ENCODE measurements at regions of chrX and their contacts with region 1.

Region 1: DNA sequence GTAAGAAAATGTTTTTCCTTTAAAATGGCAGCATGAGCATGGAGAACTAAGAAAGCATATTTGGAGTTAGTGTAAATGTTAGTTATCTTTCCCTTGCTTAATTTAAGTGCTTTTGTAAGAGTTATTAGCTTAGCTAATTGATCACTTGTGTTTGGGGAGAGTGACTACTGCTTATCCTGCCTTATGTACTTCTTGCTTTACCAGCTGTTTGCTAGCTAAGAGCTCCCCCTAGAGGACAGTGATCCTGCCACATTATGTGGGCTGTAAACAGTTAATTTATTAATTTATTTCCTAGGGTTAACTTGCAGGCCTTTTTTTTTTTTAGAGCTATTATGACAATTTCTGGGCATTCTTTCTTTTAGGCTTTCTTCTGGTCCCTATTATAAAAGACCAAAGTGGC is 435.8 kb downstream of the MAGEB5 start:
- DNase-seq: no peak
- ATAC-seq: no peak
- H3K4me3 ChIP-seq: no peak overlapping the region
- H3K27ac ChIP-seq: no peak overlapping the region
- H3K4me1 ChIP-seq: no peaks in the 10 kb centered on the region
- H3K27me3 ChIP-seq: no peaks in the 10 kb centered on the region
- CTCF ChIP-seq: peak in 2 of 3 experiments; percentile 33 to 36; a peak in 3 of 6 replicates
- EP300 ChIP-seq: no peak
- POLR2A ChIP-seq: no peak
- RAD21 ChIP-seq: peak; percentile 24; the same call in 1 of the 2 replicates

Region 2: GRCh38 chrX:26557691-26558321 is 93.9 kb before region 1 on chrX:
- CTCF ChIA-PET with region 1: no interaction called
- POLR2A ChIA-PET with region 1: no interaction called
- RAD21 ChIA-PET with region 1: no interaction called
- SMC1A ChIA-PET with region 1: no interaction called
- in situ Hi-C with region 1: no loop called
- intact Hi-C with region 1: no loop called
- DNase-seq: no peak
- ATAC-seq: no peak
- H3K4me3 ChIP-seq: no peak overlapping the region
- H3K27ac ChIP-seq: no peak overlapping the region
- H3K4me1 ChIP-seq: no peaks in the 10 kb centered on the region
- H3K27me3 ChIP-seq: no peaks in the 10 kb centered on the region
- CTCF ChIP-seq: no peak
- EP300 ChIP-seq: no peak
- POLR2A ChIP-seq: no peak
- RAD21 ChIP-seq: no peak

Region 3: GRCh38 chrX:26631385-26631784 is 20.4 kb before region 1 on chrX:
- CTCF ChIA-PET with region 1: interaction called, 10 read pairs
- POLR2A ChIA-PET with region 1: no interaction called
- RAD21 ChIA-PET with region 1: no interaction called
- SMC1A ChIA-PET with region 1: interaction called, 4 read pairs
- in situ Hi-C with region 1: no loop called
- intact Hi-C with region 1: no loop called
- DNase-seq: no peak
- ATAC-seq: no peak
- H3K4me3 ChIP-seq: no peak overlapping the region
- H3K27ac ChIP-seq: no peak overlapping the region
- H3K4me1 ChIP-seq: no peaks in the 10 kb centered on the region
- H3K27me3 ChIP-seq: no peaks in the 10 kb centered on the region
- CTCF ChIP-seq: no peak
- EP300 ChIP-seq: no peak
- POLR2A ChIP-seq: no peak
- RAD21 ChIP-seq: no peak

Region 4: GRCh38 chrX:26664919-26665318 is 13.2 kb after region 1 on chrX:
- CTCF ChIA-PET with region 1: interaction called, 19 read pairs
- POLR2A ChIA-PET with region 1: no interaction called
- RAD21 ChIA-PET with region 1: no interaction called
- SMC1A ChIA-PET with region 1: interaction called, 4 read pairs
- in situ Hi-C with region 1: no loop called
- intact Hi-C with region 1: no loop called
- DNase-seq: no peak
- ATAC-seq: no peak
- H3K4me3 ChIP-seq: no peak overlapping the region
- H3K27ac ChIP-seq: no peak overlapping the region
- H3K4me1 ChIP-seq: no peaks in the 10 kb centered on the region
- H3K27me3 ChIP-seq: no peaks in the 10 kb centered on the region
- CTCF ChIP-seq: no peak
- EP300 ChIP-seq: no peak
- POLR2A ChIP-seq: no peak
- RAD21 ChIP-seq: no peak

Region 5: DNA sequence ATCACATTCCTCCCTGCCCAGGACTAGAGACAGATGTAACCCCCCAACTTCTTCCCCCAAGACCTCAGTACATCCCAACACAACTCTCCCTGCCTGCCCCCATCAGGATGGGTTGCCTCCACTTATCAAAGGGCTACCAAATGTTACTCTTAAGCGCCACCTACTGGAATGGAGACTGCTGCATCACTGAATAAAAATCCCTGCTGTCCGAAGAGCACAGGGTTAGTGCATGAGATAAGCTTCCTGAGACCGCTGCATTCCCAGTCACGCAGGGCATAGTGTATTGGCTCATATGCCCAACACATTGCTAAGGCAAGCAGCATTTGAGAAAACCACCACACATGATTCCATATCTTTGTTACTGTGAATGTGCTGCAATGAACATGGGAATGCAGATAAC is 266.9 kb after region 1 on chrX:
- CTCF ChIA-PET with region 1: interaction called, 3 read pairs
- POLR2A ChIA-PET with region 1: no interaction called
- RAD21 ChIA-PET with region 1: no interaction called
- SMC1A ChIA-PET with region 1: no interaction called
- in situ Hi-C with region 1: no loop called
- intact Hi-C with region 1: loop called (anchors 2 kb)
- DNase-seq: no peak
- ATAC-seq: peak; percentile 87
- H3K4me3 ChIP-seq: no peak overlapping the region
- H3K27ac ChIP-seq: no peak overlapping the region
- H3K4me1 ChIP-seq: no peaks in the 10 kb centered on the region
- H3K27me3 ChIP-seq: no peaks in the 10 kb centered on the region
- CTCF ChIP-seq: peak; percentile 55 to 63 (median 60)
- EP300 ChIP-seq: no peak
- POLR2A ChIP-seq: no peak
- RAD21 ChIP-seq: peak; percentile 69

Region 6: DNA sequence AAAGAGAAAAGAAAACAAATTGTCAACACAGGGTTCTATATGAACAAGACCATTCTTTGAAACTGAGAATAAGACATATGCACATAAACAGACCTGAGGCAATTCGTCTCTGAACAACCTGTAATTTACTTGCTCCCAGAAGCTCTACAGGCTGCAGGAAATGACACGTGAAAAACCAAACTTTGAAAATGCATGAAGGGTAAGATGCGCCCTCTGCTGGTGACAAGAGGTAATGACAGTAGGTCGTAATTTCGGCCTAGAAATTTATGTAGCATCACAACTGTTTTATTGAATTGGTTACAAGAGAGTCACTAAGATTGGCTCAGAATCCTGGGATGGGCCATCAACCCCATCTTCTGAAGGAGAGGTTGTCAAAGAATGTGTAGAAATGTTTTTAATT is 534.9 kb after region 1 on chrX:
- CTCF ChIA-PET with region 1: interaction called, 24 read pairs
- POLR2A ChIA-PET with region 1: no interaction called
- RAD21 ChIA-PET with region 1: interaction called, 4 read pairs
- SMC1A ChIA-PET with region 1: interaction called, 6 read pairs
- in situ Hi-C with region 1: loop called (anchors 5 kb)
- intact Hi-C with region 1: loop called (anchors 1 kb)
- DNase-seq: peak; percentile 0
- ATAC-seq: peak; percentile 62
- H3K4me3 ChIP-seq: no peak overlapping the region
- H3K27ac ChIP-seq: no peak overlapping the region
- H3K4me1 ChIP-seq: no peaks in the 10 kb centered on the region
- H3K27me3 ChIP-seq: no peaks in the 10 kb centered on the region
- CTCF ChIP-seq: peak; percentile 79 to 83 (median 83)
- EP300 ChIP-seq: no peak
- POLR2A ChIP-seq: no peak
- RAD21 ChIP-seq: peak; percentile 78

Region 7: DNA sequence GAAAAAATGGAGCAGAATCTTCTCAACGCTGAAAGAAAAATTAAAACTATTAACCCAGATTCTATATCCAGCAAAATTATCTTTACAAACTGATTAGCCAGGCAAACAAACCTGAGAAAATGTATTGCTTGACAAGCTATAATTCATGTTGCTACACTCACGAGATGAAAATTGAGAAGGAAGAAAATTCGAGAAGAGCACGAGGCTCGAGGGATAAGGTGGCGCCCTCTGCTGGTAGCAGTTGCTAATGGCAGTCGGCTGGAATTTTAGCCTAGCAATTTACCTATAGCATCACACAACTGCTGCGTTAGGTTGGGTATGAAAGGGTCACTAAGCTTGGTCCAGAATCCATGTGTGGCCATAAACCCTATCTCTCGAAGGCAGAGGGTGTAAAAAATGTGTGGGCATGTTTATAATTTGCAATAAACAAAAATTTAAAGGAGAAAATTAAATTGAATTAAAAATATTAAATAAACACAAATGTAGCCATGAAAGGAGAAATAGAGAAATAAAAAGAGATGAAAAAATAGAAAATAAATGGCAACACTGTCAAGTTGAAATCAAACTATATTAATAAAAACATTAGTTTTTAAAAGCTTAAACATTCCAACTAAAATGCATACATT is 684.8 kb after region 1 on chrX:
- CTCF ChIA-PET with region 1: no interaction called
- POLR2A ChIA-PET with region 1: no interaction called
- RAD21 ChIA-PET with region 1: no interaction called
- SMC1A ChIA-PET with region 1: no interaction called
- in situ Hi-C with region 1: no loop called
- intact Hi-C with region 1: loop called (anchors 2 kb)
- DNase-seq: no peak
- ATAC-seq: peak; percentile 73
- H3K4me3 ChIP-seq: no peak overlapping the region
- H3K27ac ChIP-seq: no peak overlapping the region
- H3K4me1 ChIP-seq: no peaks in the 10 kb centered on the region
- H3K27me3 ChIP-seq: no peaks in the 10 kb centered on the region
- CTCF ChIP-seq: peak; percentile 67 to 90 (median 87)
- EP300 ChIP-seq: no peak
- POLR2A ChIP-seq: no peak
- RAD21 ChIP-seq: peak; percentile 43

Region 8: GRCh38 chrX:27399146-27399456 is 747.3 kb after region 1 on chrX:
- CTCF ChIA-PET with region 1: interaction called, 4 read pairs
- POLR2A ChIA-PET with region 1: no interaction called
- RAD21 ChIA-PET with region 1: no interaction called
- SMC1A ChIA-PET with region 1: no interaction called
- in situ Hi-C with region 1: no loop called
- intact Hi-C with region 1: loop called (anchors 5 kb)
- DNase-seq: no peak
- ATAC-seq: no peak
- H3K4me3 ChIP-seq: no peak overlapping the region
- H3K27ac ChIP-seq: no peak overlapping the region
- H3K4me1 ChIP-seq: no peaks in the 10 kb centered on the region
- H3K27me3 ChIP-seq: no peaks in the 10 kb centered on the region
- CTCF ChIP-seq: no peak
- EP300 ChIP-seq: no peak
- POLR2A ChIP-seq: no peak
- RAD21 ChIP-seq: no peak

Region 9: DNA sequence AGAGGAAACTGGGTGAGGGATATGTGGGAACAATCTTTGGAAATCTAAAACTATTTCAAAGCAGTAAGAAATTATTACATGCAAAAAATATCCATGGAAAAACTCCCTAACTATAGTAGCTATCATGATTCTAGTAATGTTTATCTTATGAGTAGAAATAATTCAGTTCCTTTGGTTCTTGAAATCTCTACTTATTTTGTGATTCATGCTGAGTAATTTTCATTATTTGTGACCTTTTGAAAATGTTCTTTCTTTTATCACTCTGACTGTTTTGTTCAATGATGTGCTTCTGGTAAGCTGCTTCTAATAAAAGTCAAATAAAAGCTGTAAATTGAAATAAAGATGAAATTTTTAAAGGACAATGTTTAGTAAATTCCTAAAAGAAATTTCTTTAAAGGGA is 1115.6 kb after region 1 on chrX:
- CTCF ChIA-PET with region 1: no interaction called
- POLR2A ChIA-PET with region 1: no interaction called
- RAD21 ChIA-PET with region 1: no interaction called
- SMC1A ChIA-PET with region 1: no interaction called
- in situ Hi-C with region 1: no loop called
- intact Hi-C with region 1: no loop called
- DNase-seq: no peak
- ATAC-seq: no peak
- H3K4me3 ChIP-seq: no peak overlapping the region
- H3K27ac ChIP-seq: no peak overlapping the region
- H3K4me1 ChIP-seq: no peaks in the 10 kb centered on the region
- H3K27me3 ChIP-seq: no peaks in the 10 kb centered on the region
- CTCF ChIP-seq: no peak
- EP300 ChIP-seq: no peak
- POLR2A ChIP-seq: no peak
- RAD21 ChIP-seq: no peak